Left cardiac atrium (tissue), 4 donors: ENCODE measurements at regions of chr3 and their contacts with region 1.

Region 1: GRCh38 chr3:56347219-56347871 is 120.9 kb downstream of the ERC2 start:
- DNase-seq: no peak
- ATAC-seq: no peak

Region 2: GRCh38 chr3:55549177-55549576 is 798.2 kb before region 1 on chr3:
- intact Hi-C with region 1: no loop called
- DNase-seq: no peak
- ATAC-seq: no peak

Region 3: GRCh38 chr3:55935241-55935640 is 412.1 kb before region 1 on chr3:
- intact Hi-C with region 1: no loop called
- DNase-seq: no peak
- ATAC-seq: no peak

Region 4: DNA sequence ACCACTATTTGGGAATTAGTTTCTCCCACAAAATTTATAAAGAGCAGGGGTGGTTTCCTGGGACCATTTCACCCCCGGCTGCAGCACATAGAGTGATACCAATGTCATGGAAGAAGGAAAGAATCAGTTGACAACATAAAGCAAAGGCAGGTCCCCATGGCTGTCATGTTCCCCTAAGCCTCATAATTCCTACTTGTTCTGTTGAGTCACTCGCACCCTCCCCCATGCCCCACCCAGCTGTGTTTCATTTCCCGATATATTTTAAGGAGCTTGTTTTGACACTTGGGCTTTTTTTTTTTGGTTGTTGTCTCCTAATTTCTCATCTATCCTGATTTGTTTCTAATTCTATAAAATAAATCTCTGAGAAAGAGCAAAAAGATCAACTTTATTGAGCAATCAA is 96.0 kb after region 1 on chr3:
- intact Hi-C with region 1: loop called in 1 of 2 experiments (anchors 10 kb)
- DNase-seq: no peak
- ATAC-seq: no peak

Region 5: DNA sequence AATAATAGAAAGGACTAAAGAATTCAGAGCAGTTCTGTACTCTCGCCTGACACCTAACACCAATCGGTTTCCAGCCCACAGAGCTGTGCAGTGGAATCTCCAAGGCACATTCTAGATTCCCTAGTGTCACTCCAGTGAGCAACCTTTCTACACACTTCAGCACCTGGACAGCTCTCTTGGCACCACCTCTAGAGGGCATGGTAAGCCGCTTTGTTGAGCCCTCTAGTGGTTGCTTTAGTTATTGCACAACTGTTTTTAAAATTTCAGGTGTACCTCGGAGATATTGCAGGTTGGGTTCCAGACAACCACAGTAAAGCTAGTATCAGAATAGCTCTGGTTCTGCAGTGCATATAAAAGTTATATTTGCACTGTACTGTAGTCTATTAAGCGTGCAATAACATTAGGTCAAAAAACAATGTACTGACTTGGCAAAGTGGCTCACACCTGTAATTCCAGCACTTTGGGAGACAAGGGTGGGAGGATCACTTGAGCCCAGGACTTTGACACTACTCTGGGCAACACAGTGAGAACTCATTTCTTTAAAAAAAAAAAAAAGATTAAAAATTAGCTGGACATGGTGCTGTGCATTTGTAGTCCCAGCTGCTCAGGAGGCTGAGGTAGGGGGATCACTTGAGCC is 147.5 kb after region 1 on chr3:
- intact Hi-C with region 1: loop called (anchors 5 kb)
- DNase-seq: peak; percentile 82
- ATAC-seq: peak; percentile 80 to 92

Region 6: DNA sequence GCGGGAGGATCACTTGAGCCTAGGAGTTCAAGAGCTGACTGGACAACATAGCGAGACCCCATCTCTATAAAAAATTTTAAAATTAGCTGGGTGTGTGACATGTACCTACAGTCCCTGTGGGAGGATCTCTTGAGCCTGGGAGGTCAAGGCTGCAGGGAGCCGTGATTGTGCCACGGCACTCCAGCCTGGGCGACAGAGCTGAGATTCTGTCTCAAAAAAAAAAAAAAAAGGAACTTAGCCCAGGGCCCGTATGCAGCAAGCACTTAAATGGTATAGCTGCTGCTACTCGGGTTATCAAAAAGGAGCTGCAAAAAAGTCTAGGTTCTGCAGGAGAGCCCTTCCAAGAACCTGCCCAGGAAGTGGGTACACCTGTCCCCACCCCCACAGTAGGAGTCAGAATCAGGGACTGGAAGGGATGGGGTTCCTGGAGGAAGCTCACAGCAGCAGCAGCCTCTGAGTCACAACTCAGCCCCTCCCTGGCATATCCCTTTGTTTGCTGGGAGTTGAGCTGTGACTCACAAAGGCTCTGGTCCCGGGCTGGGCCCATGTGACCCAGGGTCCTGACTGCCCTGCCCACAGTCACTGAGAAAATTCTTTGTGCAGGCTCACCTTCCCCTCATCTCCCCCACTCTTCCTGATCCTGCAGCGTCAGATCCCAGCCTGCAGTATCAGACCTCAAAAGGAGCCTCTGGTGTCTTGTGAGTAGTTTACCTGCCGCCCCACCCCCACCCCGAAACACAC is 712.9 kb after region 1 on chr3 and contains the start of gene SPATA12:
- intact Hi-C with region 1: no loop called
- DNase-seq: peak; percentile 81
- ATAC-seq: peak; percentile 45 to 97
- total RNA-seq, gene SPATA12: not detected